ENCODE measurements at regions of chr21 and their contacts with region 1.

Region 1: GRCh38 chr21:25385911-25386474 is 221.3 kb downstream of the MRPL39 start:
- DNase-seq: peak; percentile 49
- ATAC-seq: peak; percentile 97
- H3K4me3 Mint-ChIP-seq: no peak overlapping the region
- H3K27ac Mint-ChIP-seq: no peak overlapping the region
- H3K4me1 Mint-ChIP-seq: peaks cover 10% of the 10 kb centered on the region
- H3K27me3 Mint-ChIP-seq: no peaks in the 10 kb centered on the region
- CTCF ChIP-seq: peak; percentile 43; the same call in 1 of the 2 replicates

Region 2: GRCh38 chr21:25273959-25274358 is 112.0 kb before region 1 on chr21:
- CTCF ChIA-PET with region 1: interaction called, 10 read pairs
- POLR2A ChIA-PET with region 1: no interaction called
- DNase-seq: no peak
- ATAC-seq: no peak
- H3K4me3 Mint-ChIP-seq: no peak overlapping the region
- H3K27ac Mint-ChIP-seq: no peak overlapping the region
- H3K4me1 Mint-ChIP-seq: no peaks in the 10 kb centered on the region
- H3K27me3 Mint-ChIP-seq: no peaks in the 10 kb centered on the region; the same call in 1 of the 2 replicates
- CTCF ChIP-seq: no peak

Region 3: GRCh38 chr21:25283720-25284119 is 102.3 kb before region 1 on chr21:
- CTCF ChIA-PET with region 1: interaction called, 51 read pairs
- POLR2A ChIA-PET with region 1: no interaction called
- DNase-seq: no peak
- ATAC-seq: peak; percentile 84
- H3K4me3 Mint-ChIP-seq: peak overlapping the region; percentile 5
- H3K27ac Mint-ChIP-seq: no peak overlapping the region
- H3K4me1 Mint-ChIP-seq: peaks cover 42% of the 10 kb centered on the region
- H3K27me3 Mint-ChIP-seq: no peaks in the 10 kb centered on the region
- CTCF ChIP-seq: peak; percentile 28; the same call in 1 of the 2 replicates

Region 4: GRCh38 chr21:25350056-25350455 is 35.9 kb before region 1 on chr21:
- CTCF ChIA-PET with region 1: interaction called, 42 read pairs
- POLR2A ChIA-PET with region 1: no interaction called
- DNase-seq: peak; percentile 71
- ATAC-seq: peak; percentile 78
- H3K4me3 Mint-ChIP-seq: no peak overlapping the region
- H3K27ac Mint-ChIP-seq: no peak overlapping the region
- H3K4me1 Mint-ChIP-seq: no peaks in the 10 kb centered on the region
- H3K27me3 Mint-ChIP-seq: peaks cover 2% of the 10 kb centered on the region; the same call in 1 of the 2 replicates
- CTCF ChIP-seq: peak; percentile 70

Region 5: GRCh38 chr21:25360593-25360992 is 25.4 kb before region 1 on chr21:
- CTCF ChIA-PET with region 1: interaction called, 14 read pairs
- POLR2A ChIA-PET with region 1: no interaction called
- DNase-seq: no peak
- ATAC-seq: peak; percentile 85
- H3K4me3 Mint-ChIP-seq: no peak overlapping the region
- H3K27ac Mint-ChIP-seq: no peak overlapping the region
- H3K4me1 Mint-ChIP-seq: peaks cover 8% of the 10 kb centered on the region
- H3K27me3 Mint-ChIP-seq: no peaks in the 10 kb centered on the region
- CTCF ChIP-seq: no peak; the same call in 1 of the 2 replicates

Region 6: DNA sequence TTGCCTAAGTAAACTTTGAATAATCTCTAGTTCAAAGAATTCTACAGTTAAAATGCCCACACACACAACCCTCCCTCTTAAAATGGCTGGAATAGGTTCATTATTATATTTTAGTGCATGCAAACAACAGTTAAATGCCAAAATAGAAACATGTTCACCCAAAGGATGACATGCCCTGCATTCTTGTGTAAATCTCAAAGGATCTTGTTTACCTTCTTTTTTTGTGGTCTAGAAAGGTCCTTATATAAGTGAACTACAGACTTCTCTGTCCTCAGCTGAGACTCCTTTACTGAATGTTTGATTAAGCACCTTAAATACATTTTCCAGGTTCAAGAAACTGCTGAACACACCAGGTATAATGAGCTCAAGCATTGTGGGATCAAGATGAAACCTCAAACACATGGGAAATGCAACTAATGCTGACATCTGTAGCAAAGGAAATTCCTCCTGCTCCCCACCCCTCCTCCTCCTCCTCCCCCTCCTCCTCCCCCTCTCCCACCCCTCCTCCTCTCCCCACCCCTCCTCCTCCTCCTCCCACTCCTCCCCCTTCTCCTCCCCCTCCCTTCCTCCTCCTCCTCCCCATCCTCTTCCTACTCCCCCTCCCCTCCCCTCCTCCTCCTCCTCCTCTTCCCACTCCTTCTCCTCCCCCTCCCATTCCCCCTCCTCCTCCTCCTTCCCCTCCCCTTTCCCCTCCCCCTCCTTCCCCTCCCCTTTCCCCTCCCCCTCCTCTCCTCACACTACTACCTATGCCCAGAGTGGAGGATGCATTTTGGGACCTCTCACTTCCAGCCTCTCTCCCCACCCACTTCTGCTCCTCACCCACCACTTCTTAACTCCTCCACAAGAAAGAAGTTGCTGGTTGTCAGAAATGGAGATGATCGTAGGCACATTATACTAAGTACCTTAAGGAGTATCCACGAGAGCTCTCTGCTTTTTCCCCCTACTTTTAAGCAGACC is 12.6 kb before region 1 on chr21:
- CTCF ChIA-PET with region 1: interaction called, 15 read pairs
- POLR2A ChIA-PET with region 1: interaction called, 3 read pairs
- DNase-seq: peak; percentile 36
- ATAC-seq: peak; percentile 56
- H3K4me3 Mint-ChIP-seq: peak overlapping the region; percentile 22
- H3K27ac Mint-ChIP-seq: peak overlapping the region; percentile 79
- H3K4me1 Mint-ChIP-seq: peaks cover 47% of the 10 kb centered on the region
- H3K27me3 Mint-ChIP-seq: no peaks in the 10 kb centered on the region
- CTCF ChIP-seq: no peak

Region 7: GRCh38 chr21:25400427-25400826 is 14.4 kb after region 1 on chr21:
- CTCF ChIA-PET with region 1: interaction called, 13 read pairs
- POLR2A ChIA-PET with region 1: no interaction called
- DNase-seq: no peak
- ATAC-seq: peak; percentile 44; the same call in 1 of the 2 replicates
- H3K4me3 Mint-ChIP-seq: no peak overlapping the region
- H3K27ac Mint-ChIP-seq: no peak overlapping the region
- H3K4me1 Mint-ChIP-seq: no peaks in the 10 kb centered on the region
- H3K27me3 Mint-ChIP-seq: no peaks in the 10 kb centered on the region; the same call in 1 of the 2 replicates
- CTCF ChIP-seq: no peak

Region 8: DNA sequence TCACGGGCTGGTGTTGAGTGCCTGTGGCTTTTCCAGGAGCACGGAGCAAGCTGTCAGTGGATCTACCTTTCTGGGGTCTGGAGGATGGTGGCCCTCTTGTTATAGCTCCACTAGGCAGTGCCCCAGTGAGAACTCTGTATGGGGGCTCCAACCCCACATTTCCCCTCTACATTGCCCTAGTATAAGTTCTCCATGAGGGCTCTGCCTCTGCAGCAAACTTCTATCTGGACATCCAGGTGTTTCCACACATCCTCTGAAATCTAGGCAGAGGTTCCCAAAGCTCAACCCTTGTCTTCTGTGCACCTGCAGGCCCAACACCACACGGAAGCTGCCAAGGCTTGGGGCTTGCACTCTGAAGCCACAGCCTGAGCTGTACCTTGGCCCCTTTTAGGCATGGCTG is 64.0 kb after region 1 on chr21:
- CTCF ChIA-PET with region 1: no interaction called
- POLR2A ChIA-PET with region 1: no interaction called
- DNase-seq: no peak
- ATAC-seq: no peak
- H3K4me3 Mint-ChIP-seq: no peak overlapping the region
- H3K27ac Mint-ChIP-seq: no peak overlapping the region
- H3K4me1 Mint-ChIP-seq: no peaks in the 10 kb centered on the region
- H3K27me3 Mint-ChIP-seq: no peaks in the 10 kb centered on the region
- CTCF ChIP-seq: no peak

Region 9: GRCh38 chr21:25518491-25518911 is 132.5 kb after region 1 on chr21:
- CTCF ChIA-PET with region 1: no interaction called
- POLR2A ChIA-PET with region 1: no interaction called
- DNase-seq: peak; percentile 30
- ATAC-seq: peak; percentile 78
- H3K4me3 Mint-ChIP-seq: no peak overlapping the region
- H3K27ac Mint-ChIP-seq: no peak overlapping the region
- H3K4me1 Mint-ChIP-seq: peaks cover 12% of the 10 kb centered on the region
- H3K27me3 Mint-ChIP-seq: no peaks in the 10 kb centered on the region
- CTCF ChIP-seq: no peak

Measured in WTC11 (cell line).